ENCODE measurements at regions of chr3 and their contacts with region 1.

Region 1: DNA sequence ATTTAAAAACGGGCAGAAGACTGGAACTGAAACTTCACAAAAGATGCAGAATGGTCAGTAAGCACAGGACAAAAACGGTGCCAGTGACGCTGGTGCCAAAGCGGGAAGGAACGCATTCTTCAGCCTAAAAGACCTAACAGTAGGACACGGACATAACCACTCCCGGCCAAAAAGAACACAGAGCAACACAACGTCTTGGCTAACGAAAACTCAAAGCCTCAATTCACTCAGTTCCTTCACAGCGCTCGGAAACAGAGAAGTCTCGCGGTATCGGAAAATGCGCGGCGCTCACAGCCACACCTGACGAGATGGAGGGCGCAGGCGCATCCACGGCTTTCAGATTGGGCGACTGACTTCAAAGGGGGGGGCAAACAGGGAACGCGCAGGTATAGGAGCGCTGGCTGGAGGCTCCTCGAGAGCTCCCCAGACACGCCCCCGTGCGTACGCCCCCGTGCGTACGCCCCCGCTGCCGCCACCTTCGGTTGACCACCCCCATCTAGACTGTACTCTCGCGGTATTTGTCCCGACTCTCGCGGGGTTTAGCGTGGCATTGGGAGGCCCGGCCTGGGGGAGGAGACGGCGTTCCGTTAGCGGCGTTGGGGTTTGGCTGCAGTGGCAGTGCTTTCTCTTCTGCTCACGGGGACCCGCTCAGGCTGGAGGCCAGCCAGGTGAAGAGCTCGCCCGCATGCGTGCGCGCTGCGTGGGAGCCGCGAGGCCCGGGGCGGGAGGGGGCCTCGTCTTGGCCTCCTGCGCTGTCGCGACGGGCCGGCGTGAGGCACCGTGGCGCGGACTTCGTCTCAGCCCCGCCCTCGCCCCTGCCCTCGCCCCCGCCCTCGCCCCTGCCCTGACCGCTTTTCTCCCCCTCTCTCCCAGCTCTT is at the start of gene NKTR:
- DNase-seq: peak; percentile 86 to 99 (median 95)

Region 2: DNA sequence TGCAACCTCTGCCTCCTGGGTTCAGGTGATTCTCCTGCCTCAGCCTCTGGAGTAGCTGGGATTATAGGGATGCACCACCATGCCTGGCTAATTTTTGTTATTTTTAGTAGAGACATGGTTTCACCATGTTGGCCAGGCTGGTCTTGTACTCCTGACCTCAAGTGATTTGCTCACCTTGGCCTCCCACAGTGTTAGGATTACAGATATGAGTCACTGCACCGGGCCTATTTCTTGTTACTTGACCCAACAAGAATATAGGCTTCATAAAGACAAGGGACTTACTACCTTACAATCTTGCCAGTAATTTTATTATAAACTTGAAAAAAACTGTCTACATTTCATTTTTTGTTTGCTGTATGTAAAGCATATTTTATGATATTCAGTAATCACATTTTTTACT is 31.8 kb after region 1 on chr3:
- intact Hi-C with region 1: loop called (anchors 2 kb)
- DNase-seq: no peak

Region 3: GRCh38 chr3:42652611-42653302 is 52.4 kb after region 1 on chr3:
- intact Hi-C with region 1: loop called (anchors 5 kb)
- DNase-seq: peak in 24 of 42 donors; percentile 39 to 79 (median 60)

Region 4: DNA sequence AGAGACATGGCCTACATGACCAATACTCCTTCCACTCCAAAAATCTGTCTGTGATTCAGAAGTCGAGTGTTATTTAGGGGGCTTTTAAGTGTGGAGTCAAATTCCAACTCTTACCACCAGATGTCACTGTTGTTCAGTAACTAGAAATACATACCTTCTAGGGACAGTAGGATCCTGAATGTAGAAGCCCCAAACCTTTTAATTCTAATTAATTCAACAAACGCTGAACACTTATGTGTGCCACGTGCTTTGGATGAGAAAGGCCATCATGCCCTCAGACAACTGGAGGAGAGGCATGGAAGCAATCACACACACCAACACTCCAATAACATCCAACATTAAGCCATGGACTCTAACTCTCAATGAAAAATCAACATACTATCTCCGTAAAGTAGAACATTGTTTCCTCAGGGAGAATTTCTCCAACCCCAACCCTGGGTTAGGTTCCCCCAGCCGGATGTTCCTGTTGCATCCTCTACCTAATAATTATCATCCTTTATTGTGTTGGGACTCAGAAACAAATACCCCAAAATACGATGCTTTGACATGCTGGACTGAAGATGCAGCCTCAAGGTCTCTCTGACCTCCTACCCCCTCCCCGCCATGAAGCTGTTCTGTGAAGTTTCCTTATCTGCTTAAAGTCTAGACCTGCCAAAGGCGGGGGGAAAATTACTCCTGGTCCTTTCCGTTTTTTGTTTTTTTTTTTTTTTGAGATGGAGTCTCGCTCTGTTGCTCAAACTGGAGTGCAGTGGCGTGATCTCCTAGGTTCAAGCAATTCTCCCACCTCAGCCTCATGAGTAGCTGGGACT is 180.7 kb after region 1 on chr3:
- intact Hi-C with region 1: no loop called
- DNase-seq: peak in 7 of 42 donors; percentile 23 to 70 (median 43)

Region 5: DNA sequence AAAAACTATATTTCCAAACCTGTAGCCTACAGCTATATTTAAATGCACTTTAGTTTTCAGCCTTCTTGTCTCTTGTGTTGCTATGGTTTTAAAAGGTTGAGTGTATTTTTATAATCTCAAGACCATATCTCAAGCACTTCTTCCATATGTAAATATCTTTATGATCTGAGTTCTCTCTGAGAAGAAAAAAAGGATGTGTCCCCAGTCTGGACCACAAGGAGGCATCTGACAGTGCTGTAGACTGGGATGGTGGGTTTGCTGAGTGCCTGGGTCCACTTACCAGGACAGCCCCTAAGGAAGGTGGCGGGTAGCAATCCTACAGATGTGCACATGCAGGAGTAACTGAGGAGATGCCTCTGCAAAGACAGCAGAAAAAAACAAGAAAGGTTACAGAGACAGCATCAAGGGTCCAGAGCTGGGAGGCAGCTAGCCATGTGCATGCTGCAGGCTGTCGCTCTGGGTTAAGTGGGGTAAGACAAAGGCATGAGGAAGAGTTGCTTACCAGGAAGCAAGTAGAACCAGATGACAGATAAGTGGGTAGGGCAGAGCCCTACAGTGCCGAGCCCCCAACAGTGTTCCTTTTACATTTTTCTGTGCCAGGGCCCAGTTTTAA is 615.4 kb after region 1 on chr3:
- intact Hi-C with region 1: no loop called
- DNase-seq: no peak

Region 6: GRCh38 chr3:43256714-43257461 is 656.5 kb after region 1 on chr3:
- intact Hi-C with region 1: no loop called
- DNase-seq: no peak

Measured in head of caudate nucleus (tissue), 42 donors.